ENCODE measurements at regions of chr6 and their contacts with region 1.

Region 1: DNA sequence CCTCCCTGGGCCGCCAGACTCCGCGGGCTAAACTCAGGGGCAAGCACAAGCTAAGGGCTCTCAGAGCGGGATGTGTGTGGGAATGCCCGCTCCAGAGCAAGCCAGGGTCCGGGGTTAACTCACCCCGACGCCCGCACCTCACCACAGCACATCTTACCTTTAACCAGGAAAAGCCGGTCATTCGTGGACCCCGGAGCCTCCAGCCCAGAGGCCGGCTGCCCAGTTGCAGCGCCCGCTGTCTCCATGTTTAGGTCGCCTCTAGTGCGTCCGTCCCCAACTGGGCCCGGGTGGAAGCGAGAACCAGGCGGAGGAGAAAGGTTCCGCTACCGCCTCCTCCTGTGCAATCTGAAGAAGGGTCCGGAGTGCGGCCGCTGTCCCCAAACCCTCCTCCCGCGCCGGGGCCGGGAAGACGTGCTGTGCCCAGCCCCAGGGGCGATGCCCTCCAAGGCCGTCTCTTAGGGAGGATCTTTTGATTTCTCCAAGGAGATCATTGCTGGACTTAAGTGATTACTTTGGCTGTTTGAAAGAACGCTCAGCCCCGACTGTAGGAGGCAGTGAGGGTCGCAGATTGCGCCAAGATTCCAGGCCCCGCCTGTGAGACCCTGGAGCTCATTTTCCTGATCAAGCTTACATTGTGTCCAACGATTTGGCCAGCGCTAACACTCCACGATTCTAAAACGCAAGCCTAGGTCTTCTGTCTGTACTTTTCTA is at the start of gene TMEM242:
- DNase-seq: peak; percentile 95 to 96 (median 95)
- H3K4me3 ChIP-seq: peak within 1 kb of the TSS; percentile 78 to 97 (median 96)
- H3K27ac ChIP-seq: peak within 1 kb of the TSS; percentile 82 to 91
- H3K4me1 ChIP-seq: peaks cover 8 to 19% (median 11%) of the 10 kb centered on the region in 4 experiments
- H3K27me3 ChIP-seq: peaks cover 0 to 3% (median 0%) of the 10 kb centered on the region in 5 experiments

Region 2: GRCh38 chr6:157339432-157339831 is 16.0 kb after region 1 on chr6:
- CTCF ChIA-PET with region 1: interaction called, 71 read pairs
- POLR2A ChIA-PET with region 1: interaction called, 5 read pairs
- DNase-seq: peak in 2 of 3 donors; percentile 4 to 6
- H3K4me3 ChIP-seq: no peak overlapping the region
- H3K27ac ChIP-seq: no peak overlapping the region
- H3K4me1 ChIP-seq: peaks cover 0 to 10% (median 5%) of the 10 kb centered on the region in 4 experiments
- H3K27me3 ChIP-seq: no peaks in the 10 kb centered on the region

Region 3: DNA sequence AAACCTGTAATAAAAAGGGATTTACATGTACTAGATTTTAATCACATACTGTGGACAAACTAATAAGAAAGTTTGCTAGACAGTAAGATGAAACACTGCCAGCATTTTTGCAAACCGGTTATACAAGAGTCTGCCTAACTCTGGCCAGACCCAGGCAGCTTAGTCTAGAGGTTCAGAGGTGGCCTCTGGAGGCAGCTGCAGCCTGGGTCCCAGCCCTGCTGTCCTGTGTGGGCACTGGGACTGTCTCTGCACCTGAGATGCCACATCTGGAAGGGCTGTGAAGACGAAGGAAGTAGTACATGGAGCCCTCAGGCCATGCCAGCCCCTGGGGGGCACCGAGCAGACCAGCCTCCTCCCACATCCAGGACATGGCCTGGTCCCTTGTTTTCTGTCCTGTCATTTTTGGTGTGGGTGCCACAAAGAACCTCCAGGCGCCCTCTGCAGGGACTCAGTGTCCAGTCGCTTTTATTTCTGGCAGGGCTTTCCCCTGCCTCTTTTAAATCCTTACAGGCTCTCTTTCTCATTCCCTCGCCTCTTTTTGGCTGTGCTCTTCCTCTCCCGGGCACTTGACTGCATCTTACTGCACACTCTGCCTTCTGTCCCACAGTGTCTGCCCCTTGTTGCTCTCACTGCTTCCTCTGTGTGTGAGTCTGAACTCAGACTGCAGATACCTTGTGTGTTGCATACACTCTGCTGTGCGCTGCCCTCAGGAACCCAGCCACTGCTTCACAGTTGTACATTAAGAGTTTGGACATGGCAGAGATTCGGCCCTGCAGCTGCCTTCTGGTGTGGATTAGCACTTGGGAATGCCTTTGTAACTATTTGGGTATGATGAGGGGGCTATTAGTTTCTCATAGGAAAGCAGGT is 274.3 kb after region 1 on chr6:
- CTCF ChIA-PET with region 1: interaction called, 13 read pairs
- POLR2A ChIA-PET with region 1: no interaction called
- DNase-seq: peak; percentile 38 to 58 (median 51)
- H3K4me3 ChIP-seq: no peak overlapping the region
- H3K27ac ChIP-seq: no peak overlapping the region
- H3K4me1 ChIP-seq: no peaks in the 10 kb centered on the region
- H3K27me3 ChIP-seq: no peaks in the 10 kb centered on the region

Measured in common myeloid progenitor, CD34-positive (primary cell).